Left lung (tissue), 14 donors: ENCODE measurements at regions of chr2 and their contacts with region 1.

Region 1: GRCh38 chr2:106085181-106085940 is 108.7 kb downstream of the UXS1 start:
- DNase-seq: peak in 1 of 4 donors; percentile 53
- ATAC-seq: peak; percentile 72
- H3K4me3 ChIP-seq: no peak overlapping the region
- H3K27ac ChIP-seq: no peak overlapping the region
- H3K4me1 ChIP-seq: no peaks in the 10 kb centered on the region
- H3K27me3 ChIP-seq: no peaks in the 10 kb centered on the region
- CTCF ChIP-seq: peak in 1 of 2 donors; percentile 32

Region 2: GRCh38 chr2:105344704-105345345 is 740.5 kb before region 1 on chr2:
- intact Hi-C with region 1: loop called in 1 of 2 experiments (anchors 10 kb)
- DNase-seq: peak in 2 of 4 donors; percentile 26 to 40
- ATAC-seq: no peak
- H3K4me3 ChIP-seq: no peak overlapping the region
- H3K27ac ChIP-seq: no peak overlapping the region
- H3K4me1 ChIP-seq: no peaks in the 10 kb centered on the region
- H3K27me3 ChIP-seq: no peaks in the 10 kb centered on the region
- CTCF ChIP-seq: peak in 1 of 2 donors; percentile 18

Region 3: DNA sequence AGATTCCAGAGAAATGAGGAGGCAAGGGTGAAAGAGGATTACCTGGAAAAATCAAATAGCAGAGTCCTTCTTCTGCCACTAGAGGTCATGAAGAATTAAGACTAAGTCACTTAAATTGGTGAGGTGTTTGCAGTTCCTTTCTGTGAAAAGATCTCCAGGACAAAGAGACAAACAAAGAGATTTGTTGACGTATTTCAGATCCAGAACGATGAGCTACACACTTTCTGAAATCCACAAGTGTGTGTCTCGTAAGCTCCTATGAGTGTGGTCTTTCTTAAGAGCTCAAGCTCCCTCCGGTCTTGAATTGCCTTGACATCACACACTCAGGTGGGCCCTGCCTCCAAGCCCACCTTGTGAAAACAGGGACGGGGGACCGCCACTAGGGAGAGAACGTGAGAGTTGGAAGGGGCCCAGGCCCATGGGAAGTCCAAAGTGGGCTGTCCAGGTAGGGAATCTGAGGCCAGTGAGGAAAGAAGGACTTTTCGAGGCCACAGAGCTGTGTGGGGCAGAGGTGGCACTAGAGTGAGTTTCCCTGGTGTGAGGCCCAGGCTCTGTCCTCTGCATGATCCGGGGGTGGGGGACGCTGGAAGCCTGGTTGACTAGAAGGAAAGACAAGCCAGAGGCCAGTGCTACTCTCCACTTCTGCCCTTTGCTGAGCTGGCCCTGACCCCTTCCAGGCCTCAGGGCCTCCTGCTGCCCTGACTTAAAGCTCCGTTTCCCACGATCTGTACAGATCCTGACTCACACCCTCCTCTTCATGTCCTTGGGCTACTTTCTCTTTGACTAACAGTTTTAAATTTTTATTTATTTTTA is 508.7 kb before region 1 on chr2:
- intact Hi-C with region 1: loop called in 1 of 2 experiments (anchors 10 kb)
- DNase-seq: peak in 2 of 4 donors; percentile 22 to 43
- ATAC-seq: peak; percentile 68
- H3K4me3 ChIP-seq: no peak overlapping the region
- H3K27ac ChIP-seq: no peak overlapping the region
- H3K4me1 ChIP-seq: no peaks in the 10 kb centered on the region
- H3K27me3 ChIP-seq: no peaks in the 10 kb centered on the region
- CTCF ChIP-seq: peak; percentile 19 to 42

Region 4: DNA sequence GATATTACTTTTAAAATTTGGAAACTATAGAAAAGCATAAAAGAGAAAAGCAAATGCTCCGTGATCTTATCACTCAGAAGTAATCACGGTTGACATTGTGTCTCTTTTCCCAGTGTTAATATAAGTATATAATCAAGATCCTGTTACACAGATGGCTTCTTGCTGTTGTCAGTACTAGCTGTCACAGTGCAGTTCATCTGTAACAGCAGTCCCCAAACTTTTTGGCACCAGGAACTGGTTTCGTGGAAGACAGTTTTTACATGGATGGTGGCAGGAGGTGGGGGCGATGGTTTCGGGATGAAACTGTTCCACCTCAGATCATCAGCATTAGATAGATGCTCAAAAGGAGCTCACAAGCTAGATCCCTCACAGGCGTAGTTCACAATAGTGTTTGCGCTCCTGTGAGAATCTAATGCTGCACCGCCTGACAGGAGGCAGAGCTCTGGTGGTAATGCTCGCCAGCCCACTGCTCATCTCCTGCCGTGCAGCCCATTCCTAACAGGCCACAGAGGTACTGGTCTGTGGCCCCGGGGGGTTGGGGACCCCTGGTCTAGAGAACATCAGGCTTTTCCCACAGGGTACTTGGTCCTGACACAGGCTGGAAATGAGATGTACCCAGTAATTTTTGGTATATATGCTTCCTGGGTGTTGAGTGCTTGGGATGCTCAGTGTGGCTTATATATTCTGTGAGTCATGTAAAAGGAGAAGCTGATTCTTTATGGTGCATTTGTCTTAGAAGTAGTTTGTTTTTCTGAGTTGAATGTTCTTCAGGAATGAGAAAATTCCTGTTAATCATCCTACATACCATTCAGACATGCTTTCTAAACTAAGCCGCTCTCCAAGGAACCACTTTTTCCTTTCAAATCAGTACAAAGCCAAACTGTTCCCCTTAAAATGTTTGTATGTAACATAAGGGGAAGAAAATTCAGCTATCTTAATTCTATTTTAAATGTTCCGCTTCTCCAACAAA is 218.9 kb before region 1 on chr2:
- intact Hi-C with region 1: no loop called
- DNase-seq: no peak
- ATAC-seq: no peak
- H3K4me3 ChIP-seq: no peak overlapping the region
- H3K27ac ChIP-seq: no peak overlapping the region
- H3K4me1 ChIP-seq: peaks cover 4 to 20% of the 10 kb centered on the region in 2 donors
- H3K27me3 ChIP-seq: no peaks in the 10 kb centered on the region
- CTCF ChIP-seq: no peak

Region 5: DNA sequence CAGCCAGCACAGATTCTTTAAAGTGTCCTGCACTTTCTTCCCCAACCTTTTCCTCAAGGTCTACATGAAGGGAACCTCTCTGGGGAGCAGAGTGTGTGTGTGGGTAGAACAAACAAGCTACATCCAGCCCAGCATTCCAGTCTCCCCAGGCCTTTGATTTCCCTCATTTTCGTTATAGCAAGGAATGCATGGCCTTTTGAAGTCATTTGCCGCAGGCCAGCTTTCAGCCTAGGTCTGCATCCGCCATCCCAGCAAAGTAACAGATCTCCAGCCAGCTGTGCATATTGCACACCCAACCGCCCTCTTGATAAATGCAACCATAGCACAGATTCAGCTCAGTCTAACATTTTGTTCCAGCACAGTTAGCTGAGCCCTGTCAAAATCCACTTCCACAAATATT is 446.4 kb after region 1 on chr2:
- intact Hi-C with region 1: no loop called
- DNase-seq: no peak
- ATAC-seq: no peak
- H3K4me3 ChIP-seq: no peak overlapping the region
- H3K27ac ChIP-seq: no peak overlapping the region
- H3K4me1 ChIP-seq: peaks cover 0 to 3% of the 10 kb centered on the region in 2 donors
- H3K27me3 ChIP-seq: no peaks in the 10 kb centered on the region
- CTCF ChIP-seq: no peak

Region 6: GRCh38 chr2:106624787-106625380 is 539.5 kb after region 1 on chr2:
- intact Hi-C with region 1: no loop called
- DNase-seq: no peak
- ATAC-seq: no peak
- H3K4me3 ChIP-seq: no peak overlapping the region
- H3K27ac ChIP-seq: no peak overlapping the region
- H3K4me1 ChIP-seq: no peaks in the 10 kb centered on the region
- H3K27me3 ChIP-seq: no peaks in the 10 kb centered on the region
- CTCF ChIP-seq: no peak